ENCODE measurements at regions of chr5 and their contacts with region 1.

Region 1: GRCh38 chr5:129760636-129761505 is 13.0 kb downstream of the MINAR2 start:
- DNase-seq: no peak
- H3K4me3 ChIP-seq: no peak overlapping the region
- H3K27ac ChIP-seq: no peak overlapping the region
- H3K27me3 ChIP-seq: no peaks in the 10 kb centered on the region
- CTCF ChIP-seq: no peak

Region 2: GRCh38 chr5:129563585-129563984 is 197.3 kb before region 1 on chr5:
- CTCF ChIA-PET with region 1: interaction called, 15 read pairs
- POLR2A ChIA-PET with region 1: no interaction called
- DNase-seq: no peak
- H3K4me3 ChIP-seq: no peak overlapping the region
- H3K27ac ChIP-seq: no peak overlapping the region
- H3K27me3 ChIP-seq: no peaks in the 10 kb centered on the region
- CTCF ChIP-seq: no peak

Region 3: GRCh38 chr5:129945028-129945427 is 184.2 kb after region 1 on chr5:
- CTCF ChIA-PET with region 1: no interaction called
- POLR2A ChIA-PET with region 1: no interaction called
- DNase-seq: peak; percentile 3
- H3K4me3 ChIP-seq: no peak overlapping the region
- H3K27ac ChIP-seq: no peak overlapping the region
- H3K27me3 ChIP-seq: no peaks in the 10 kb centered on the region
- CTCF ChIP-seq: no peak

Region 4: GRCh38 chr5:130102375-130102774 is 341.5 kb after region 1 on chr5:
- CTCF ChIA-PET with region 1: no interaction called
- POLR2A ChIA-PET with region 1: no interaction called
- DNase-seq: no peak
- H3K4me3 ChIP-seq: no peak overlapping the region
- H3K27ac ChIP-seq: no peak overlapping the region
- H3K27me3 ChIP-seq: no peaks in the 10 kb centered on the region
- CTCF ChIP-seq: no peak